ENCODE measurements at regions of chr13 and their contacts with region 1.

Region 1: DNA sequence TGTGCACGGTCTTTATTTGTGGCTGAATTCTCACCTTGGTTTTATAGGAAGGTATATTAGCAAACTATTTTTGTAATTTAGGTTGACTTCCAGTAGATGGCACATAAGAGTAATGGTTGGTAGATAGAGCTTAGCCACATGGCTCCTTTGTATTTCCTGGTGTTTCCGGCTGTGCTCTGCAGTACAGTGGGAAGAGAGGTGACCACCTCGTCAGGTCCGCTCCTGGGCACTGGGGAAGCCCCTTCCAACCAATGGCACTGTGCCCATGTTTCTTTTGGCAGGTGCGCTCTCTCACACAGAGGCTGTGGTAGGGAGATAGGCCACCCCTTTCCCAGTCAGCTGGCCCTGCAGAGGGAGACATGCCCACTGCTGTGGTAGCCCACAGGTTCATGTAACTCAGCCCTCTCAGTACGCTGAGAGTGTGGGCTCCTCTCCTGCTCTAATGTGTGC is 74.3 kb upstream of the ATP12A start:
- DNase-seq: peak in 4 of 5 donors; percentile 19 to 51 (median 29)
- H3K4me3 ChIP-seq: no peak overlapping the region
- H3K4me3 Mint-ChIP-seq: no peak overlapping the region
- H3K27ac ChIP-seq: no peak overlapping the region
- H3K27ac Mint-ChIP-seq: peak overlapping the region in 2 of 7 donors; percentile 13 to 41
- H3K4me1 ChIP-seq: peaks cover 7% of the 10 kb centered on the region
- H3K4me1 Mint-ChIP-seq: peaks cover 6 to 13% (median 7%) of the 10 kb centered on the region in 4 donors
- H3K27me3 ChIP-seq: no peaks in the 10 kb centered on the region
- H3K27me3 Mint-ChIP-seq: no peaks in the 10 kb centered on the region

Region 2: DNA sequence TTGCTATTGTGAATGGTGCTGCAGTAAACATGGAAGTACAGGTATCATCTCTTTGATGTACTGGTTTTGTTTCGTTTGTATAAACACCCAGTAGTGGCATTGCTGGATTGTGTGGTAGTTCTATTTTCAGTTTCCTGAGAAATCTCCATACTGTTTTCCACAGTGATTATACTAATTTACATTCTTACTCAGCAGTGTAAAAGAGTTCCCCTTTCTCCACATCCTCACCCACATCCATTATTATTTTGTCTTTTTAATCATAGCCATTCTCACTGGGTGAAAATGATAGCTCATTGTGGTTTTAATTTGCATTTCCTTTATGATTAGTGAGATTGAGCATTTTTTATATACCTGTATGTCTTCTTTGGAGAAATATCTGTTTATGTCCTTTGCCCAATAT is 31.1 kb before region 1 on chr13:
- CTCF ChIA-PET with region 1: interaction called, 13 read pairs
- POLR2A ChIA-PET with region 1: no interaction called
- intact Hi-C with region 1: no loop called
- DNase-seq: no peak
- H3K4me3 ChIP-seq: no peak overlapping the region
- H3K4me3 Mint-ChIP-seq: no peak overlapping the region
- H3K27ac ChIP-seq: no peak overlapping the region
- H3K27ac Mint-ChIP-seq: no peak overlapping the region
- H3K4me1 ChIP-seq: no peaks in the 10 kb centered on the region
- H3K4me1 Mint-ChIP-seq: no peaks in the 10 kb centered on the region
- H3K27me3 ChIP-seq: no peaks in the 10 kb centered on the region
- H3K27me3 Mint-ChIP-seq: peaks cover 0 to 6% of the 10 kb centered on the region in 2 donors

Region 3: DNA sequence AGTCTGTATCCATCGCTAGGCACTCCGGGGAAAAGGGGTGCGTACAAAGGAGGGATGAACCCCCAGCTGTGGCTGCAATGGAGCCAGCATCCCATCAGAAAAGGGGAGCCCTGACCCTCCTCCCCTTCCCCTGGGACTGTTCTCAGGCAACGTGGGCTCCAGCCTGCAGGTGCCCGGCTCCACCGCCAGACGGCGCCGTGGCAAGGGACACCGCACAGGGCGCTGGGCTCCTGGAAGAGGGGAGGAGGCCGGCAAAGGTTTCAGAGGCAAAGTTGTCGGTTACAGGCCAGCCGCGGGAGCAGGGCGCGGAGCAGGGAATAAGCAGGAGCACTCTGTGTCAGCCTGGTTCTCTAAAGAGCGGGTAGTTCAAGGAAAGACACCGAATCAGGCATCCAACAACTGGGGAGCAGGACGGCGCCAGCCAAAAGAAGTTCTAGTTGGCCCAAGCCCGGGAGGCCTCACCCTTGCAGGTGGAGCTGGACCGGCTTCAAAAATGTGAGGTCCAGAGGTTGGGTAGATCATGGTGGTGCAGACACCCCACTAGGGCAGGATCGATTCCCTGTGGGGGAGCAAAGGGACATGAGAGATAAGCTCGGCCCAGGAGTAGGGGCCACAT is 21.3 kb after region 1 on chr13:
- CTCF ChIA-PET with region 1: interaction called, 77 read pairs
- POLR2A ChIA-PET with region 1: interaction called, 14 read pairs
- intact Hi-C with region 1: no loop called
- DNase-seq: no peak
- H3K4me3 ChIP-seq: peak overlapping the region in 1 of 2 donors; percentile 25
- H3K4me3 Mint-ChIP-seq: no peak overlapping the region
- H3K27ac ChIP-seq: peak overlapping the region; percentile 40
- H3K27ac Mint-ChIP-seq: peak overlapping the region in 3 of 7 donors; percentile 36 to 46 (median 43)
- H3K4me1 ChIP-seq: peaks cover 38% of the 10 kb centered on the region
- H3K4me1 Mint-ChIP-seq: peaks cover 19 to 62% (median 38%) of the 10 kb centered on the region in 4 donors
- H3K27me3 ChIP-seq: no peaks in the 10 kb centered on the region
- H3K27me3 Mint-ChIP-seq: no peaks in the 10 kb centered on the region

Region 4: DNA sequence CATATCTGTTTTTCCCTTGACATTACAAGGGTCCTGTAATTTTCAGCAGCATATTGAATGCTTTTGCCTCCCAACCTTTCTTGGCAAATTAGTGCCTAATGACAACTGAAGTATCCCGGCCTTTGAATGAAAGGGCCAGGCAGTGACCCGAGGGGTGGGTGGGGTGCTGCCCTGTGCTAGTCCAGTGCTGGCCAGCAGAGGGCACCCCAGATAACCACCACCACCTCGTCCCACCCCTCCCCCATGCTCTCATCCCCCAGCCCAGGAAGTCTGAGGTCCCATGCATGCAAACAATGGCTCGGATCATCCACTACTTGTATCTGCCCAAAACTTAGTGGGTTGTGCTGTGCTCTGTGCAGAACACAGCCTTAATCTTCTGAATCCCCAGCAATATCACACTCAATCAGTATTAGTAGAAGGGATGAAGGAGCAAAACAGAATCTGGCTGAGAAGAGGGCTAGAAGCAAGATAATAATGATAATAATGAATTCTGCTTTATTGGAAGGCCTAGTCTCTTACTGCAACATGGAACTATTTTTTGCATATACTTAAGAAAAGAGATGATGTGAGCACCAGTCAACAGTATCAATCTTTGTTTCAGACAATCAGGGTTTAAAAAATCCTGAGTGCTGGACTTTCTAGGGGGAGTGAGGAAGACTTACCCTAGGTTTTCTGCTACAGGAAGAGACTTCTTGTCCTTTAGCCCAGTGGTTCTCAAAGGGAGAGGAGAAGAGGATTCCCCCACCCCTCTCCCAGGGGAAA is 78.1 kb after region 1 on chr13:
- CTCF ChIA-PET with region 1: interaction called, 12 read pairs
- POLR2A ChIA-PET with region 1: interaction called, 3 read pairs
- intact Hi-C with region 1: no loop called
- DNase-seq: peak; percentile 45 to 56 (median 54)
- H3K4me3 ChIP-seq: peak overlapping the region in 1 of 2 donors; percentile 11
- H3K4me3 Mint-ChIP-seq: peak overlapping the region in 6 of 8 donors; percentile 40 to 71 (median 62)
- H3K27ac ChIP-seq: no peak overlapping the region
- H3K27ac Mint-ChIP-seq: peak overlapping the region in 6 of 7 donors; percentile 2 to 54 (median 40)
- H3K4me1 ChIP-seq: peaks cover 31% of the 10 kb centered on the region
- H3K4me1 Mint-ChIP-seq: peaks cover 22 to 44% (median 34%) of the 10 kb centered on the region in 4 donors
- H3K27me3 ChIP-seq: peaks cover 13% of the 10 kb centered on the region
- H3K27me3 Mint-ChIP-seq: peaks cover 19% of the 10 kb centered on the region in 2 donors

Region 5: GRCh38 chr13:24709186-24709913 is 103.4 kb after region 1 on chr13:
- CTCF ChIA-PET with region 1: interaction called, 11 read pairs
- POLR2A ChIA-PET with region 1: no interaction called
- intact Hi-C with region 1: no loop called
- DNase-seq: peak; percentile 68 to 87 (median 78)
- H3K4me3 ChIP-seq: peak overlapping the region in 1 of 2 donors; percentile 11
- H3K4me3 Mint-ChIP-seq: peak overlapping the region; percentile 52 to 82 (median 70)
- H3K27ac ChIP-seq: no peak overlapping the region
- H3K27ac Mint-ChIP-seq: peak overlapping the region; percentile 81 to 90 (median 86)
- H3K4me1 ChIP-seq: peaks cover 13% of the 10 kb centered on the region
- H3K4me1 Mint-ChIP-seq: peaks cover 12 to 16% (median 13%) of the 10 kb centered on the region in 4 donors
- H3K27me3 ChIP-seq: no peaks in the 10 kb centered on the region
- H3K27me3 Mint-ChIP-seq: peaks cover under 1 to 1% of the 10 kb centered on the region in 2 donors

Region 6: GRCh38 chr13:24734950-24735349 is 129.0 kb after region 1 on chr13:
- CTCF ChIA-PET with region 1: interaction called, 12 read pairs
- POLR2A ChIA-PET with region 1: no interaction called
- intact Hi-C with region 1: no loop called
- DNase-seq: no peak
- H3K4me3 ChIP-seq: no peak overlapping the region
- H3K4me3 Mint-ChIP-seq: no peak overlapping the region
- H3K27ac ChIP-seq: no peak overlapping the region
- H3K27ac Mint-ChIP-seq: no peak overlapping the region
- H3K4me1 ChIP-seq: no peaks in the 10 kb centered on the region
- H3K4me1 Mint-ChIP-seq: no peaks in the 10 kb centered on the region
- H3K27me3 ChIP-seq: no peaks in the 10 kb centered on the region
- H3K27me3 Mint-ChIP-seq: peaks cover 4% of the 10 kb centered on the region in 2 donors